Calu3 (cell line): ENCODE measurements at regions of chr1 and their contacts with region 1.

Region 1: DNA sequence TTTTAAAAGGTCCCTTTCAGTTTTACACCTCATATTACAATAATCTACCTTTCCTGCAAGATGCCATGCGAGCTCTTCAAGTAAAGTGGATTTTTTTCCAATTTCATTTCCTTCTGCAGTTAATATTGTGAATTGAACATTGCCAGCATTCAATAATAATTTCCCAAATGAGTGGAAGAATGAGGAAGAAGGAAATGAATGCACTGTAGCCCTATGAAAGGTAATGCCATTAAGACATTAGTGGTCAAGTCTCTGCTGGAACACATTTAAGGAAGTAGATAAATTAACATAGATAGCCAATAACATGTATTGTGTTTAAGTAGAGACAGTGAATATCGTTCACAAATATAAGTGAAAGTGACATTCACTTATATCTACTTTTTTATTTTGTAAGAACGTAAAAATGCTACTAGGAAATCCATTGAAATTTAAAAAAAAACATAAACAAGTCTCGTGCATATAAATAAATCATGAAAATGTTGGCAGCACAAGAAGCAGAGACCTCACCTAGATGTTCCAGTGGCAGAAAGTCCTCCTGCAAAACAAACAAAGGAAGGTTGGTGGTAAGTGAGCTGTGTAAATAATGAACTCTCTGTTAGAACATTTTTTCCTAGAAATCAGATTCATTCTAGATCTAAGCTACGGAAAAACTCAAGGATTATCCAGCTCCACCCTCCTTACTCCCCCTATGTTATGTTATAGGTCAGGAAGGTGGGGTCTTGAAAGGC is 17.7 kb downstream of the FCRL3 start:
- DNase-seq: no peak
- H3K4me3 Mint-ChIP-seq: peak overlapping the region; percentile 97
- H3K27ac Mint-ChIP-seq: peak overlapping the region; percentile 99
- H3K4me1 Mint-ChIP-seq: peaks cover 84% of the 10 kb centered on the region
- H3K27me3 Mint-ChIP-seq: no peaks in the 10 kb centered on the region
- CTCF ChIP-seq: no peak

Region 2: GRCh38 chr1:157595356-157595755 is 87.5 kb before region 1 on chr1:
- CTCF ChIA-PET with region 1: no interaction called
- intact Hi-C with region 1: loop called (anchors 5 kb)
- DNase-seq: no peak
- H3K4me3 Mint-ChIP-seq: no peak overlapping the region
- H3K27ac Mint-ChIP-seq: no peak overlapping the region
- H3K4me1 Mint-ChIP-seq: peaks cover 33% of the 10 kb centered on the region
- H3K27me3 Mint-ChIP-seq: no peaks in the 10 kb centered on the region
- CTCF ChIP-seq: no peak

Region 3: GRCh38 chr1:157626099-157626498 is 56.8 kb before region 1 on chr1:
- CTCF ChIA-PET with region 1: no interaction called
- intact Hi-C with region 1: loop called (anchors 5 kb)
- DNase-seq: peak; percentile 38
- H3K4me3 Mint-ChIP-seq: no peak overlapping the region
- H3K27ac Mint-ChIP-seq: no peak overlapping the region
- H3K4me1 Mint-ChIP-seq: peaks cover 26% of the 10 kb centered on the region
- H3K27me3 Mint-ChIP-seq: no peaks in the 10 kb centered on the region
- CTCF ChIP-seq: no peak

Region 4: DNA sequence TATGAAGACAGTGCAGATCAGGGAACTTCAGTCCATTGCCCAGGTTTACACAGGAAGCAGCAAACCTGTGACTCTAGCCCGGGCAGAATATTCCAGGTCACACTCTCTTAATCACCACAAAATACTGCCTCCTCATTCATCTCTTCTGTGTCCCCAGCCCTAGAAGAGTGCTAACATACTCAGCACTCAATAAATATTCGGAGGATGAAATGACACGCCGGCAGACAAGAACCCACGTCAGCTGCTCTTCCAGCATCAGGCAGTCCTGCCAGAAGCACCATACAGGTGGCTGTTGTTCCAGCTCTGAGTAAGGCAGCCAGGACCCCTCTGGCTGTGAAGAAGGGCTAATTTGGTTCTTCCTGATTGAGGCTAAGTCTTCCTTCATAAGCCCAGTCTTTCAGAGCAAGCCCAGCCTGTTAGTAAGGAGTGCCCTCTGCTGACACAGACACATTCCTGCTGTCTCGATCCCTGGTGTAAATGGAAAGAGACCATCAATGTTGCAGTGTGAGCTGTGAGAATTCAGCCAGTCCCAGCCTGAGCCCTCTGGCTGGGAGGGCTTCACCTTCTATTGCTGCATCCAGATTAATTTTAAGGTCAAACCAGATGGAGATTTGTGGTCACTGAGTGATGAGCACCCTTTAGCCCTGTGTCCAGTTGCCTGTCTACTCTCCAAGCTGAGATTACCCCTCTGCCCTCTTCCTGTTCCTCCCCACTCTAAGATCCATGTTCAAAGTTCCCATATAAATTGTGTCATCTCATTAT is 265.6 kb after region 1 on chr1:
- CTCF ChIA-PET with region 1: no interaction called
- intact Hi-C with region 1: loop called (anchors 5 kb)
- DNase-seq: peak; percentile 61
- H3K4me3 Mint-ChIP-seq: no peak overlapping the region
- H3K27ac Mint-ChIP-seq: no peak overlapping the region
- H3K4me1 Mint-ChIP-seq: peaks cover 26% of the 10 kb centered on the region
- H3K27me3 Mint-ChIP-seq: peaks cover 28% of the 10 kb centered on the region
- CTCF ChIP-seq: peak; percentile 72